ENCODE measurements at regions of chr17 and their contacts with region 1.

Region 1: DNA sequence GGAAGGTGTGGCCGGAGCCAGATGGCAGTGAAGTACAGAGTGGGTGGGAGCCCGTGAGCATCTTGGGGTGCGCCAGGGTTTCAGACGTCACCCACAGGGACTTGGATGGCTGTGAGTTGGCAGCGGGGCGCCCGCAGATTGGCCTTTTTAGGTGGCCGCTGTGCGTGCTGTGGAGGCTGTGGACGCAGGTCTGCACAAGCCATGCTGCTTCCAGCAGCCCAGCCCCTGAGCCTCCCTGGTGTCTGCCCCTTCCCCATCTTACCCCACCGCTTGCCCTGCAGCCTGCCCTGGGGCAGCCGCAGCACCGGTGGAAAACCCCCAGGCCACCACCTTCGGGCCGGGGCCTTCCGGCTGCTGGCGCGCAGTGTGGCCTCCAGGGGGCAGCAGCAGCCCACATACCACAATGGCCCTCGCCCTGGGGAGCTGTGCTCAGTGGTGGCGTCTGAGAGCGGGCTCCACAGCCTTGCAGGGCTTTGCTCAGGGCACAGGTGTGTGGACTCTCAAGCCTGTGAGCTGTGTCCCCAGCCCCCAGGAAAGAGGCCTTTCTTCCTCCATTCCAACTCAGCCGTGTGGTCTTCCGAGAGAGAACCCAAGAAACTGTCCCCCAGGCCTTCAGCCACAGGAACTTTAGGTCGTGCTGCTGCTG is 11.8 kb downstream of the ENDOV start:
- DNase-seq: peak; percentile 72 to 88 (median 88)
- ATAC-seq: peak; percentile 71 to 77
- H3K4me3 ChIP-seq: no peak overlapping the region
- H3K27ac ChIP-seq: no peak overlapping the region
- H3K4me1 ChIP-seq: no peaks in the 10 kb centered on the region
- H3K27me3 ChIP-seq: no peaks in the 10 kb centered on the region

Region 2: DNA sequence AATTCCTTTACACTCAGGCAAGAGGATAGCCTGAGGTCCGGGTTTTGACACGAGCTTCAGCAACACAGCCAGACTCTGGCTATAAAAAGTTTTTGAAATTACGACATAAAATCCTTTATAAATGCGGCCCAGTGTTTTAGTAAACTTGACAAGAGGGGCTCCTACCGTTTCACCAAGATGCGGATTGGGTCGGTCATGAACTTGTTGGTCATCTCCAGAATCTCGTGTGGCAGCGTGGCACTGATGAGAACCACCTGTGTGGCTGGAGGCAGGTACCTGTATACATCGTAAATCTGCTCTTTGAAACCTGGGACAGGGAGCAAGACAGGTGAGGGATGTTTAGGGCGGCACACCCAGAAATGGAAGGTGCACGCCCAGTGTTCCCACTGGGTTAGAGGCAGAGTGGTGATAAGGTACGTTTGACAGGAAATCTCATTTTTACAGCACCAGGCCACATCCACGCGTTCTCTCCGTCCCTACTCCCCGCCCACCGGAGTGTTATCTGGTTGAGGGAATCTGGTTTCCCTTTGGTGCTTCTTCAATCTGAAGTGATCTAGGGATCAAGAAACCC is 287.9 kb before region 1 on chr17:
- intact Hi-C with region 1: no loop called
- DNase-seq: no peak
- ATAC-seq: no peak
- H3K4me3 ChIP-seq: no peak overlapping the region
- H3K27ac ChIP-seq: no peak overlapping the region
- H3K4me1 ChIP-seq: no peaks in the 10 kb centered on the region
- H3K27me3 ChIP-seq: no peaks in the 10 kb centered on the region

Region 3: DNA sequence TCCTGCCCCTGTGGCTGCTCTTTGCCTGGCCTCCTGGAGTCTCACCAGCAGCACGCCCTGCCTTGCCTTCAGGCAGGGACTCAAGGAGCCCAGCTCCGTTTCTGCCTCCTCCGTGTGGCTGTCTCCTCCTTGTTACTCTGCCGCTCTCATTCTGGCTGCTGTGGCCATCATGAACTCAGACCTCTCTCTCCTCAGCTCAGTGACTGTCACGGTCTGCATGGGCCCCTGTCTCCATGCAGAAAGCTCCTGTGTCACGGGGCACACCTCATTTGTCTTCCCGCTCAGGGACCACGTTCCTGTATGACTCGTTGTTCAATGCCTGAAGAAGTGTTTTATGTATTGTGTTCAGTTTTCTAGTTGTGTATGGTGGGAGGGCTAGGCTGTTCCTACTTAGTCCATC is 143.1 kb after region 1 on chr17:
- intact Hi-C with region 1: loop called in 2 of 4 experiments (anchors 5 to 10 kb)
- DNase-seq: no peak
- ATAC-seq: no peak
- H3K4me3 ChIP-seq: no peak overlapping the region
- H3K27ac ChIP-seq: no peak overlapping the region
- H3K4me1 ChIP-seq: no peaks in the 10 kb centered on the region
- H3K27me3 ChIP-seq: no peaks in the 10 kb centered on the region

Region 4: GRCh38 chr17:80575057-80575875 is 148.5 kb after region 1 on chr17:
- intact Hi-C with region 1: loop called in 2 of 4 experiments (anchors 5 to 10 kb)
- DNase-seq: peak; percentile 79 to 93 (median 86)
- ATAC-seq: peak; percentile 87 to 90
- H3K4me3 ChIP-seq: no peak overlapping the region
- H3K27ac ChIP-seq: no peak overlapping the region
- H3K4me1 ChIP-seq: peaks cover 2% of the 10 kb centered on the region
- H3K27me3 ChIP-seq: no peaks in the 10 kb centered on the region

Region 5: GRCh38 chr17:80981062-80981902 is 554.5 kb after region 1 on chr17:
- intact Hi-C with region 1: loop called (anchors 2 to 5 kb)
- DNase-seq: peak in 1 of 3 donors; percentile 67
- ATAC-seq: peak; percentile 25 to 44
- H3K4me3 ChIP-seq: peak overlapping the region; percentile 4
- H3K27ac ChIP-seq: no peak overlapping the region
- H3K4me1 ChIP-seq: no peaks in the 10 kb centered on the region
- H3K27me3 ChIP-seq: no peaks in the 10 kb centered on the region

Measured in right cardiac atrium (tissue), 5 donors.